Dorsolateral prefrontal cortex (tissue), 120 donors: ENCODE measurements at regions of chr7 and their contacts with region 1.

Region 1: DNA sequence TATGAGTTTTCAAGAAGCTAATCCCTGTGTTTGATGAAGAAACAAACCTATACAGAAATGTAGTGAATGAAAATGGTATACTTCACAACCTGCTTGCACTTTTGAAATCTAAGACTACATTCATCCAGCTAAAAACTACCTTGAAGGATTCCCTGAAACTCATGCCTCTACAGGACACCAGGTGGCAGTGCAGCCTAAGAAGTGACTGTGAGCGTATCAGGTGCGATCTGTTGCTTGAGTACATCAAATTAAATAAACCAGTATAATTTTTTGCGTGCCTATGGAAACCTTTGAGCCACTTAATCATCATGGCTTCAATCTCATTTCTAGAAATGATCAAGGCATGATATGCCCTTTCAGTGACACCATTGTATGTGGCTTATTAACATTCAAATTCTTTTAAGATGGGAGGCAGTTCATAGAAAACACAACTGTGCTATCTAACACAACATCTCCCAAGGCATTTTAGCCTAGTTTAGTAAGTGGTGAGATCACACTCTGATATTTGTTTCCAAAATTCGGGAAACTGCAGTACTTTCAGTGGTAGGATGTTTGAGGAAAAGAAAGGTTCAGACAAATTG is 57.4 kb downstream of the PPP1R17 start:
- DNase-seq: peak; percentile 67 to 91 (median 78)
- H3K4me3 ChIP-seq: no peak overlapping the region
- H3K27ac ChIP-seq: no peak overlapping the region
- H3K27me3 ChIP-seq: no peaks in the 10 kb centered on the region
- CTCF ChIP-seq: peak; percentile 71 to 99 (median 95)

Region 2: DNA sequence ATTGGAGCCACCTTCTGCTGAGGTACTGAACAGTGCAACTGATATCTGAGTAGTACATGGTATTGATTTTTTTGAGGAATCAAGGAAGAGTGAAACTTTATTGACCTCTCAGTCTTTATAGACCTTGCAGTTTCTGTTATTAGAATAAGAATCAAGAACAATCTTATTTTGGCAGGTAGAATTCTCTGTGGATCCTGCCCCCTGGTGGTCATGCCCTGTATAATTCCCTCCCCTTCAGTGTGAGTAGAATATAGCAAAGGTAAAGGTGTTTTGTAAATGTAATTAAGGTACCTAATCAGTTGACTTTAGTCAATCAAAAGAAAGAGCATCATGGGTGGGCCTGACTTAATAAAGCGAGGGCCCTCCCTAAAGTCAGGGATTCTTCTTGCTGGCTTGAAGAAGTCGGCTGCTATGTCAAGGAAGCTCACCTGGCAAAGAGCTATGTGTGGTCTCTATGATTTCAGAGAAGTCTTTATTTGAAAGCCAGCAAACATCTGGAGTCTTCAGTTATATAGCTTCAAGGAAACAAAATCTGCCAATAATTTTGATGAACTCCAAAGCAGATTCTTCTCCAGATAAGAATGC is 603.0 kb after region 1 on chr7:
- intact Hi-C with region 1: loop called (anchors 10 kb)
- DNase-seq: peak in 1 of 10 donors; percentile 46
- H3K4me3 ChIP-seq: no peak overlapping the region
- H3K27ac ChIP-seq: no peak overlapping the region
- H3K27me3 ChIP-seq: no peaks in the 10 kb centered on the region
- CTCF ChIP-seq: peak; percentile 54 to 89 (median 74)